ENCODE measurements at regions of chr10 and their contacts with region 1.

Region 1: DNA sequence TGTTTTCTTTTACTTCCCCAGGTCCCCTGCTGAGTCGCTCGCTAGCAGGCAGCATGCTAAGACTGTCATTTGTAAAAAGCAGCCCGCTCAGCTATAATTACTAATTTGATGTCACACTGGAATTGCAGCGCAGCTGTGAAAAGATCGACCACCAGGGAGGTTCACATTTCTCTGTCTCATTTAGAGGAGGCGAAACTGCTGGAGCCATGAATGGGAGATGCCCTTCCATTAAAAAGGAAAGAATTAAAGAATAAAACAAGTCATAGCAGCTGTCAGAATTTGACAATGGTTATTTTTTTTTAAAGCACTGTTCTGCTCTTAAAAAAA is 153.5 kb downstream of the PIP4K2A start:
- DNase-seq: no peak
- H3K4me3 ChIP-seq: no peak overlapping the region
- H3K4me3 Mint-ChIP-seq: no peak overlapping the region
- H3K27ac ChIP-seq: no peak overlapping the region
- H3K27ac Mint-ChIP-seq: peak overlapping the region in 1 of 7 donors; percentile 9
- H3K4me1 ChIP-seq: no peaks in the 10 kb centered on the region
- H3K4me1 Mint-ChIP-seq: peaks cover 9% of the 10 kb centered on the region
- H3K27me3 ChIP-seq: no peaks in the 10 kb centered on the region
- H3K27me3 Mint-ChIP-seq: peaks cover 0 to 3% (median 0%) of the 10 kb centered on the region in 3 donors
- CTCF ChIP-seq: no peak

Region 2: GRCh38 chr10:22436884-22437619 is 123.8 kb before region 1 on chr10:
- intact Hi-C with region 1: no loop called
- DNase-seq: peak; percentile 87 to 88 (median 87)
- H3K4me3 ChIP-seq: peak overlapping the region; percentile 56 to 84 (median 78)
- H3K4me3 Mint-ChIP-seq: peak overlapping the region; percentile 96 to 97
- H3K27ac ChIP-seq: peak overlapping the region; percentile 87 to 93
- H3K27ac Mint-ChIP-seq: peak overlapping the region; percentile 91 to 97 (median 94)
- H3K4me1 ChIP-seq: peaks cover 28 to 46% of the 10 kb centered on the region in 2 donors
- H3K4me1 Mint-ChIP-seq: peaks cover 37% of the 10 kb centered on the region
- H3K27me3 ChIP-seq: peaks cover 10 to 35% of the 10 kb centered on the region in 2 donors
- H3K27me3 Mint-ChIP-seq: peaks cover 19 to 46% (median 24%) of the 10 kb centered on the region in 3 donors
- CTCF ChIP-seq: no peak

Region 3: GRCh38 chr10:22615819-22616499 is 55.1 kb after region 1 on chr10:
- intact Hi-C with region 1: no loop called
- DNase-seq: peak; percentile 73 to 86 (median 83)
- H3K4me3 ChIP-seq: peak overlapping the region; percentile 18 to 69 (median 52)
- H3K4me3 Mint-ChIP-seq: peak overlapping the region; percentile 86 to 94
- H3K27ac ChIP-seq: peak overlapping the region; percentile 53 to 84
- H3K27ac Mint-ChIP-seq: peak overlapping the region; percentile 87 to 98 (median 92)
- H3K4me1 ChIP-seq: peaks cover 30 to 35% of the 10 kb centered on the region in 2 donors
- H3K4me1 Mint-ChIP-seq: peaks cover 67% of the 10 kb centered on the region
- H3K27me3 ChIP-seq: no peaks in the 10 kb centered on the region
- H3K27me3 Mint-ChIP-seq: peaks cover 0 to 1% (median 0%) of the 10 kb centered on the region in 3 donors
- CTCF ChIP-seq: no peak

Region 4: DNA sequence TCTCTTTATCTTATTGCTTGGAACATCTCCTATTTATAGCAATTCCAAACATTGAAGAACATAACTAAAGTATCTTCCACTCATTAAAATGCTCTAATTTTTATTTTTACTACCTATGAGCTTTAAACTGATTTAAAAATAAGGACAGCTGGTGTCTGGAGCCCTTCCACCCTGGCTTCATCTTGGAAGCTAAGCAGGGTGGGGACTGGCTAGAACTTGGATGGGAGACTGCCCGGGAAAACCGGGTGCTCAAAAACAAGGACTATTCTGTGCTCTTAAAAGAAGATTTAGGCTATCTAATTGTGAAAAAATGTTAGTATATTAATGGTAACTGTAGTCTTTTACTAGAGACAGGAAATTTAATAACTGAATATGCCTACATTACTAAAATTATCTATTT is 436.2 kb after region 1 on chr10:
- intact Hi-C with region 1: loop called in 1 of 2 experiments (anchors 10 kb)
- DNase-seq: no peak
- H3K4me3 ChIP-seq: no peak overlapping the region
- H3K4me3 Mint-ChIP-seq: no peak overlapping the region
- H3K27ac ChIP-seq: no peak overlapping the region
- H3K27ac Mint-ChIP-seq: no peak overlapping the region
- H3K4me1 ChIP-seq: no peaks in the 10 kb centered on the region
- H3K4me1 Mint-ChIP-seq: no peaks in the 10 kb centered on the region
- H3K27me3 ChIP-seq: no peaks in the 10 kb centered on the region
- H3K27me3 Mint-ChIP-seq: peaks cover 3 to 19% (median 4%) of the 10 kb centered on the region in 3 donors
- CTCF ChIP-seq: no peak

Measured in CD14-positive monocyte (primary cell).